ENCODE measurements at regions of chr2 and their contacts with region 1.

Region 1: DNA sequence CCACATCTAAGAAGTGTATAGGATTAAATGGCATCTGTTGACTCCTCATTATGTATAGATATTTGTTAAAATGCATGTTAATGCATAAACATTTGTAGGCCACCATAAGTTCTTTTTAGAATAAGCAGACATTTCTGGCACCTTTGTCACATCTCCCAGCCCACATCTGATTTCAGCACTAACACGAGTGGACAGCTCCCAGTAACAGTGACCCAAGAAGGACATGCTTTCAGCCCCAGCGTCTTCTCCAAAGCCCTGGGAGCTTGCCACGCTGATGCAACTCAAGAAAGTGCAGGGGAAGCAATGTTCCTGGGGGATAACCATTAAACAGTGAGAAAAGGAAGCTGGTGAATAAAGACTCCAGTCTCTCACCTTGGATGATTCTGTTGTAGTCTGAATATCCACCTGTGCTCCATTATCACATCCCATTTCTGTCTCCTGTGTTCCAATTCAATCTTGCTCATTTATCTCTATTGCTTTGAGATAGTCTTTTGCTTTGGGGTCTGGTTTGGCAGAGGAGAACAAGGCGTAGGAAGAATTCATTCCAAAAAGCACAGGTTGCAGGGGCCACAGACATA is 182.6 kb upstream of the THSD7B start:
- DNase-seq: no peak
- H3K4me3 ChIP-seq: no peak overlapping the region
- CTCF ChIP-seq: no peak
- POLR2A ChIP-seq: no peak

Region 2: DNA sequence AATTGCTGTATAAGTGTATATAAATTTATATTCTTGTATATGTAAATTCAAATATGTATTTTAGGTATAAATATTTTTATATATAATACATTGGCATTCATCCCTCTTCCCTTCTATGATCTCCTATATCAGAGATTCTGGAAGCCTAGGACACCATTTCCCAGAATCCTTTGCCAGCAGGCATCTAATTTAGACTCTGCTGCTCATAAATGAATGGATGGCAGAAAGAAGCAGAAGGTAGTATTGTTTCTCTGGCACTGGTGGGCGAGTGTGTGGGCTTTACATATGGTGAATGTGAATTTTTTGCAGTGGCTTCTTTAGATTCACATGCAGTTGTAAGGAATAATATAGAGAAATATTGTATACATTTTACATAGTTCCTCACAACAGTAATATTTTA is 32.5 kb before region 1 on chr2:
- intact Hi-C with region 1: loop called (anchors 2 kb)
- DNase-seq: no peak
- H3K4me3 ChIP-seq: no peak overlapping the region
- CTCF ChIP-seq: no peak
- POLR2A ChIP-seq: no peak